ENCODE measurements at regions of chr1 and their contacts with region 1.

Region 1: DNA sequence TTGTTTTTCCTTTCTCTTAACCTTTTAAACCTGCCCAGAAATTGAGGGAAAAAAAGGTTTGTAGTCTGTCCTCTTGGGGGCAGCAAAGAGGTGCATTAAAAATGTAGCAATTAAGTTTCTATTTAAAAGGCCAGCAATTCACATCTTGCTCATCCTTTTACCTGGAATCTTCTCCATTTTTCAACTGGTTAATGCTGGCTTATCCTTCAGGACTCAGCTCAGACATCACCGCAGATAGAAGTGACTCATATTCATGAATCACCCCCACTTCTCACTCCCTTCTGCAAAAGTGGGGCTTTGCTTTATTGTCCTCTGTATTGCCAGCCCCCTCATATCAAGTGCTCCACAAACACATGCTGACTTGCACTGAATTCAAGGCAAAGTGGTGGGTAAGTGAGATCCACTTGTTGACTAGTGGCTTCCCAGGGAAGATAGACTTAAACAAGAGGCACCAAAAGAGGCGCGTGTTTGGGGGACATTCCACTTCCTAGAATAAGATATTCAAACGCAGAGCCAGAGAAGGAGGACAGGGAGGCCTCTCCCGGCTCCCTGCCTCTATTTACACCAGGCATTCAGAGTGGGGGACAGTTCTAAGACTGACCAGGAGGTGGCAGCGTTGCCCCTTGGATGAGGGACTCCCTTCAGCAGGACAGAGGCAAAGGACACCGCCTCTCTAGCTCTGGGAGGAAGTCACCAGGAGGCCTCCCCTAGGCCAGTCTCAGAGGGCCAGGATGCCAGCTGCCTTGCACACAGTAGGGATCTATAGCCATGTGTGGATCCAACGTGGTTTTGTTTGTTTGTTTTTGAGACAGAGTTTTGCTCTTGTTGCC is 23.2 kb upstream of the ZNF648 start:
- DNase-seq: peak; percentile 84 to 86
- ATAC-seq: peak; percentile 91 to 94 (median 94)
- H3K4me3 ChIP-seq: no peak overlapping the region
- H3K27ac ChIP-seq: no peak overlapping the region
- H3K4me1 ChIP-seq: peaks cover 0 to 12% (median 5%) of the 10 kb centered on the region in 9 donors
- H3K27me3 ChIP-seq: no peaks in the 10 kb centered on the region
- CTCF ChIP-seq: peak; percentile 73 to 88 (median 87)

Region 2: GRCh38 chr1:181479137-181479745 is 605.5 kb before region 1 on chr1:
- intact Hi-C with region 1: loop called in 8 of 10 experiments (anchors 2 to 10 kb)
- DNase-seq: peak; percentile 28 to 32
- ATAC-seq: peak; percentile 75 to 91 (median 82)
- H3K4me3 ChIP-seq: no peak overlapping the region
- H3K27ac ChIP-seq: no peak overlapping the region
- H3K4me1 ChIP-seq: peaks cover 0 to 16% (median 6%) of the 10 kb centered on the region in 9 donors
- H3K27me3 ChIP-seq: peaks cover 16 to 98% (median 86%) of the 10 kb centered on the region in 7 donors
- CTCF ChIP-seq: peak; percentile 53 to 88 (median 80)

Region 3: GRCh38 chr1:182015360-182015759 is 69.3 kb before region 1 on chr1:
- intact Hi-C with region 1: no loop called
- DNase-seq: no peak
- ATAC-seq: no peak
- H3K4me3 ChIP-seq: no peak overlapping the region
- H3K27ac ChIP-seq: no peak overlapping the region
- H3K4me1 ChIP-seq: no peaks in the 10 kb centered on the region
- H3K27me3 ChIP-seq: no peaks in the 10 kb centered on the region
- CTCF ChIP-seq: peak in 7 of 9 donors; percentile 16 to 51 (median 25)

Region 4: DNA sequence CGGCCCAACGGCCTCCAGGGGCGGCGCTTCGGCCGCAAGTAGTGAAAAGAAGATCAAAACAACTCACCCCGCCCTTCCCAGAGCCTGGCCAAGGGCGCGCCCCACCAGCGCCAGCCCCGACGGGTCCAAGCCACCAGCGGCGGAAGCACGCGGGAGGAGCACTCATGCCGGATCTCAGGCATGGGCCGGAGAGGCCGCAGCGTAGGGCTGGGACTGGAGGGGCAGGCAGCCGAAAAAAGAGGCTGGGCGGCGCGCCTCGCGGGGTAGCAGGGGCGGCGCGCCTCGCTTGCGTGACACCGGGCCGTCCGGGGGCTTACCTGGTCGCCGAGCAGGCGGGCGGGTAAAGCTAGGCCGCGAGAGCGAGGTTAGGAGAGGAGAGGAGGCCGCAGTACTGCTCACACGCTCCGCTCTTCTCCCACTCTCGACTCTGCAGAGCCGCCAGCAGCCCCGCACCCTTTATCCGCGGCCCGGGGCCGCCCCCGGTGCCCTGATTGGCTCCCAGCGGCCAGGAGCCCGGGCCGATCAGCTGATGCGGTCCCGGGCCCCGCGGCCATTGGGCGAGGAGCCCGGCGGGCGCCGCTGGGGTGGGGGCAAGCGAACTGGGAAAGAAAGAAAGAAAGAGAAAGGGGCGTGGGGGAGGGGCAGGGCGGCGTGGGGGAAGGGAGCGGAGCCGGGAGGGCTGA is 306.8 kb after region 1 on chr1 and contains the start of gene GLUL:
- intact Hi-C with region 1: loop called (anchors 1 to 5 kb)
- DNase-seq: peak; percentile 93 to 96
- ATAC-seq: peak; percentile 92 to 96 (median 93)
- H3K4me3 ChIP-seq: peak within 1 kb of the TSS; percentile 65 to 99 (median 90)
- H3K27ac ChIP-seq: peak within 1 kb of the TSS; percentile 95 to 100 (median 99)
- H3K4me1 ChIP-seq: peaks cover 7 to 66% (median 49%) of the 10 kb centered on the region in 9 donors
- H3K27me3 ChIP-seq: no peaks in the 10 kb centered on the region
- CTCF ChIP-seq: peak in 5 of 9 donors; percentile 14 to 41 (median 23)
- total RNA-seq, gene GLUL: 248 to 589 (median 409) TPM

Region 5: GRCh38 chr1:182595641-182596240 is 511.0 kb after region 1 on chr1:
- intact Hi-C with region 1: loop called in 8 of 10 experiments (anchors 5 to 10 kb)
- DNase-seq: peak; percentile 48 to 72
- ATAC-seq: peak; percentile 54 to 77 (median 72)
- H3K4me3 ChIP-seq: no peak overlapping the region
- H3K27ac ChIP-seq: no peak overlapping the region
- H3K4me1 ChIP-seq: peaks cover 0 to 41% (median 7%) of the 10 kb centered on the region in 9 donors
- H3K27me3 ChIP-seq: no peaks in the 10 kb centered on the region
- CTCF ChIP-seq: peak; percentile 63 to 92 (median 90)

Region 6: GRCh38 chr1:182789138-182790076 is 704.7 kb after region 1 on chr1 and contains the start of gene NPL:
- intact Hi-C with region 1: loop called in 8 of 10 experiments (anchors 5 to 10 kb)
- DNase-seq: peak; percentile 82 to 86
- ATAC-seq: peak; percentile 96 to 98 (median 97)
- H3K4me3 ChIP-seq: peak within 1 kb of the TSS; percentile 10 to 76 (median 66)
- H3K27ac ChIP-seq: peak within 1 kb of the TSS in 8 of 10 donors; percentile 21 to 93 (median 65)
- H3K4me1 ChIP-seq: peaks cover 0 to 36% (median 7%) of the 10 kb centered on the region in 9 donors
- H3K27me3 ChIP-seq: no peaks in the 10 kb centered on the region
- CTCF ChIP-seq: no peak
- total RNA-seq, gene NPL: 1.8 to 26.5 (median 3.6) TPM

Measured in heart right ventricle (tissue), 16 donors.